ENCODE measurements at regions of chr1 and their contacts with region 1.

Region 1: GRCh38 chr1:85240174-85240601 is 19.3 kb downstream of the C1orf52 start:
- DNase-seq: peak; percentile 48
- ATAC-seq: peak; percentile 81
- H3K4me3 Mint-ChIP-seq: no peak overlapping the region
- H3K27ac Mint-ChIP-seq: no peak overlapping the region
- H3K4me1 Mint-ChIP-seq: peaks cover 7% of the 10 kb centered on the region
- H3K27me3 Mint-ChIP-seq: peaks cover 3% of the 10 kb centered on the region

Region 2: GRCh38 chr1:84478876-84479868 is 761.0 kb before region 1 on chr1 and contains the start of gene RPF1:
- CTCF ChIA-PET with region 1: no interaction called
- POLR2A ChIA-PET with region 1: no interaction called
- intact Hi-C with region 1: no loop called
- DNase-seq: peak; percentile 86
- ATAC-seq: peak; percentile 92
- H3K4me3 Mint-ChIP-seq: peak within 1 kb of the TSS; percentile 92
- H3K27ac Mint-ChIP-seq: peak within 1 kb of the TSS; percentile 98
- H3K4me1 Mint-ChIP-seq: peaks cover 40% of the 10 kb centered on the region
- H3K27me3 Mint-ChIP-seq: peaks cover 17% of the 10 kb centered on the region
- total RNA-seq, gene RPF1: 59.1 to 70.2 TPM

Region 3: DNA sequence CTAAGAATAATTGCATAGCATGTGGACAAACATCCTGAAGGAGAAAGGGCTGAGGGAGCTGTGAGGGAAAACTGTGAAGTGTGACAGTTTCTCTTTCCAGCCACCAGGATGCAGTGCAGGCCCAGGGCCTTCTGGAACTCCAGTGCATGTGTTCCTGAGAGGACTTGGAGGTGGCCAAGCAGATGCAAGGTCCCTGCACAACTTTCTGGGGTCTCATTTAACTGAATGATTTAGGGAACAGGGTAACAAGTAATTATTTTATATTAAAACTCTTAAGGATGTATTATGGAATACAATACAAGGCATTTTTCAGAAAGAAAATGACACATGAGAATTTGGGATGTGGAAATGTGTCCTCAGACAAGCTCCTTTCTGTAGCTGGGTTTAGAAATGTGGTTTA is 130.7 kb before region 1 on chr1:
- CTCF ChIA-PET with region 1: interaction called, 8 read pairs
- POLR2A ChIA-PET with region 1: no interaction called
- intact Hi-C with region 1: loop called in 1 of 2 experiments (anchors 1 kb)
- DNase-seq: peak; percentile 58
- ATAC-seq: peak; percentile 78
- H3K4me3 Mint-ChIP-seq: no peak overlapping the region
- H3K27ac Mint-ChIP-seq: no peak overlapping the region
- H3K4me1 Mint-ChIP-seq: no peaks in the 10 kb centered on the region
- H3K27me3 Mint-ChIP-seq: peaks cover 5% of the 10 kb centered on the region

Region 4: DNA sequence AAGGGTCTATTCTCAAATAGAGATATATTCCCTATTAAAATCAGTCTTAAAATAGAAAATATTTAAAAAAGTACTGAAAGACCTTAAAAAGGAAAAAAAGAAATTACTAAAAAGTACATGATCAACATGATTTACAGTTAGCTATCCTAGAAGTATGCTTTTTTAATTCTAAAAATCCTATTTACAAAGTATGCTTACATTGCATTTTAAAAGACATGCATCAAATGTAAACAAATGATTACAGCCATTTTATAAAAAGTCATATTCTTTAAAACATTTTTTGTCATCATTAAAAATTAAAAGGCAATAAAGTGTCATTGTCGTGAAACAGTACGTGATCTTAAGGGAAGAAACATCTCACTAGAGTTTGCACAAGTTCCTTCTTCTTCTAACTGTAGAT is 27.1 kb after region 1 on chr1:
- CTCF ChIA-PET with region 1: no interaction called
- POLR2A ChIA-PET with region 1: no interaction called
- intact Hi-C with region 1: no loop called
- DNase-seq: no peak
- ATAC-seq: no peak
- H3K4me3 Mint-ChIP-seq: no peak overlapping the region
- H3K27ac Mint-ChIP-seq: no peak overlapping the region
- H3K4me1 Mint-ChIP-seq: peaks cover 18% of the 10 kb centered on the region
- H3K27me3 Mint-ChIP-seq: no peaks in the 10 kb centered on the region

Region 5: DNA sequence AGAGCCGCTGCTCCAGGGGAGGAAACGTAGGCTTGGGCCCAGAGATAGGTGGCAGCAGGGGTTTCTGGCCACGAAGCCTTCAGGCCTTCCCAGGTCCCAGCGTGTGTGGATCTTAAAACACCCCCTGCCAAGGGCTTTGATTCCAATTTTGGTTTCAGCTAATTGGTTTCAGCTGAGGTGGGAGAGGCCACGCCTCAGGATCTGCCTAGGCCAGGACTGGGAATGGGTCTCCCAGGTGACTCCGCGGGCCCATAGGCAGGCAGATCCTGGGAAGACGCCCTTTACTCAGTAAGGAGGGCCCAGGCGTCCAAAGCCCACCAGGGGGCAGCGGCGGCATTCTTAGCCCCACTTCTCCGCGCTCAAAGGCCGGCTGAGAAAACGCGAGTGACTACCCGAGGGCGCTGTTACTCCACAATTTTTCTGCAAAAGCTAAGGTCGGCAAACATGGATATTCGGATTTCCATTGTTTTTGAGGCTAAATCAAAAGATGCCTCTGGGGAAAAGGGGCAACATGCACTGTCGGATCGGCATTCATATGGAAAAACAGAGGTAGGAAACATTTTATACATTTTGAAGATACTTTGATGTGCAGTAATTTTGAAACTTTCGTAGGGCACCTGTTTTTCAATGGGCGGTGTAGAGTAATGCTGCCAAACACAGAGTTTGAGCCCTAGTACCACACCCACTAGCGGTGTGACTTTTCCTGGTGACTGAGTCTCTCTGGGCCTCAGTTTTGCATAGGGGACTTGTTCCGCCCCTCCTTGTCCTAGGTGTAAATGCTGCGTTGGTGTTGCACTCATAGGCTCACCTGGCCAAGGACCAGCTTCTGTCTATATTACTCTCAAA is 68.0 kb after region 1 on chr1:
- CTCF ChIA-PET with region 1: no interaction called
- POLR2A ChIA-PET with region 1: no interaction called
- intact Hi-C with region 1: no loop called
- DNase-seq: peak; percentile 84
- ATAC-seq: peak; percentile 94
- H3K4me3 Mint-ChIP-seq: no peak overlapping the region
- H3K27ac Mint-ChIP-seq: no peak overlapping the region
- H3K4me1 Mint-ChIP-seq: peaks cover 8% of the 10 kb centered on the region
- H3K27me3 Mint-ChIP-seq: peaks cover 35% of the 10 kb centered on the region